Naive thymus-derived CD4-positive, alpha-beta T cell (primary cell): ENCODE measurements at regions of chr4 and their contacts with region 1.

Region 1: DNA sequence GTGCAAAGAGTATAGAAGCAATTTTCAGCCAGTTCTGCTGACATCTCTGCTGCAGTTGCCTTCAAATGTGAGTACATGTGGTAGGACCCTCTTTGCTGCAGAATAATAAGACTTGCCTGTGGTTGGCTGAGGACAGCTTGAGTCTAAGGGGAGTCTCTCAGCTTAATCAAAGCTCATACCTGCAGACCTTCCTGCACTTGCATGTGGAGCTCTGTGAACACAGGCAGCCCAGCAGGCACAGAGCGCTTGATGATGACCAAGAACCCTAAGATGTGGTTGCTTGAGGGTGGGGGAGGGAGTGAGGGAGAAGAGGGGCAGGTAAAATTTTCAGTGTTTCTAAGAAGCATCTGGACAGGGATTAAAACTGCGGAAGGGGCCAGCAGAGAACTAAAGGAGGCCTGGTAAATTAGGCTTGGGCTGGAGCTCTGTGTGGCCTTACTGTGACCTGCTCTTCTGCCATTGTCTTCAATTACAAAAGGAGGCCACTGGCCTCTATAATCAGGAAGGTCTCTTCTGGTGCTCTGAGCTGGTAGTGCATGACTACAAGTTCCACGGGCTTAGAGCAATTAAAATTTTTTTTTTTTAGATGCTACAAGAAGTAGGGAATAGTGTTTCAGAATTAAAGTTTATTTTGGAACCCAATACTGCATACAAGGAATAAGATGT is 59.9 kb upstream of the CHRNA9 start:
- DNase-seq: no peak
- ATAC-seq: no peak
- H3K4me3 ChIP-seq: no peak overlapping the region
- H3K4me3 Mint-ChIP-seq: peak overlapping the region in 8 of 10 donors; percentile 29 to 72 (median 56)
- H3K27ac ChIP-seq: no peak overlapping the region
- H3K27ac Mint-ChIP-seq: peak overlapping the region in 5 of 9 donors; percentile 28 to 92 (median 67)
- H3K4me1 ChIP-seq: peaks cover 0 to 26% of the 10 kb centered on the region in 2 donors
- H3K4me1 Mint-ChIP-seq: peaks cover 16 to 59% (median 46%) of the 10 kb centered on the region in 7 donors
- H3K27me3 ChIP-seq: no peaks in the 10 kb centered on the region
- H3K27me3 Mint-ChIP-seq: no peaks in the 10 kb centered on the region

Region 2: GRCh38 chr4:40289366-40290188 is 14.4 kb after region 1 on chr4:
- CTCF ChIA-PET with region 1: interaction called, 10 read pairs
- POLR2A ChIA-PET with region 1: interaction called, 11 read pairs
- intact Hi-C with region 1: no loop called
- DNase-seq: peak in 8 of 9 donors; percentile 38 to 75 (median 64)
- ATAC-seq: peak; percentile 89
- H3K4me3 ChIP-seq: peak overlapping the region; percentile 3
- H3K4me3 Mint-ChIP-seq: peak overlapping the region; percentile 35 to 88 (median 70)
- H3K27ac ChIP-seq: peak overlapping the region; percentile 65
- H3K27ac Mint-ChIP-seq: peak overlapping the region in 8 of 9 donors; percentile 83 to 96 (median 92)
- H3K4me1 ChIP-seq: peaks cover 18 to 45% of the 10 kb centered on the region in 2 donors
- H3K4me1 Mint-ChIP-seq: peaks cover 40 to 84% (median 67%) of the 10 kb centered on the region in 7 donors
- H3K27me3 ChIP-seq: no peaks in the 10 kb centered on the region
- H3K27me3 Mint-ChIP-seq: no peaks in the 10 kb centered on the region

Region 3: DNA sequence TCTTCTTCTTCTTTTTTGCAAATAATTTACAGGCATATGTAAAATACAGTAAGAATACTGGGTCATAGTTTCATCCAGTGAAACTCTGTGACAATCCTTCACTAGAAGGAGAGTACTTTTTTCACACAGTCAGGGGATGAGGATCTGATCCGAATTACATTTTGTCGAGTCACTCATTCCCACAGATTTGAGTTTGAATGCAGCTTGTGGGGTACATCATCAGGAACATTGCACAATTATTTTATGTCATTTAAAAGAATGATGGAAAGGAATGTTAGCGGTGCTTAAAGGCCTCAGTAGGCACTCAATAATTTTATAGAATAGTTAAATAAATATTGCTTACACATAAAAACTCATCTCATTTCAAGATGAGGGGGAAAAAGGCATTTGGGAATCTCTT is 148.5 kb after region 1 on chr4:
- CTCF ChIA-PET with region 1: no interaction called
- POLR2A ChIA-PET with region 1: no interaction called
- intact Hi-C with region 1: no loop called
- DNase-seq: no peak
- ATAC-seq: no peak
- H3K4me3 ChIP-seq: no peak overlapping the region
- H3K4me3 Mint-ChIP-seq: no peak overlapping the region
- H3K27ac ChIP-seq: no peak overlapping the region
- H3K27ac Mint-ChIP-seq: no peak overlapping the region
- H3K4me1 ChIP-seq: no peaks in the 10 kb centered on the region
- H3K4me1 Mint-ChIP-seq: peaks cover 0 to 8% (median 0%) of the 10 kb centered on the region in 7 donors
- H3K27me3 ChIP-seq: no peaks in the 10 kb centered on the region
- H3K27me3 Mint-ChIP-seq: no peaks in the 10 kb centered on the region